ENCODE measurements at regions of chr9 and their contacts with region 1.

Region 1: DNA sequence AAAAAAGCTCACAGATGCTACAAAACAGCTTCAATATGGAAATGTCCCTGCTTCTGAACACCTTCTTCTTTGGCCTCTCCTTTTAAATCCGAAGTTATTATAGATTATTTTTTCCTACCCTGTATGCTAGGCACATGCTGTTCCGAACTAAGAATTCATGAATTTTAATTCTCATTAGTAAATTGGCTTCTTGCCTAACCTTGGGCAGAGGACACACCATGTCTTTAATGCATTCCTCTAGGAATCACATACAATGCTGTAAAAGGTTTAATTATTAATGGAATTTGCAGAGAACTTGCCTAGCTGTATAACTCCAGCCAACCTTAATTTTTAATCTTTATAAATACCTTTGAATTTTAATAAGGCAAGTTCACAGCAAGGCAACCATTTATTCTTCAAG is 234.4 kb downstream of the NTRK2 start:
- DNase-seq: no peak
- H3K4me3 ChIP-seq: no peak overlapping the region
- H3K27ac ChIP-seq: no peak overlapping the region
- H3K4me1 ChIP-seq: no peaks in the 10 kb centered on the region
- H3K27me3 ChIP-seq: no peaks in the 10 kb centered on the region
- CTCF ChIP-seq: no peak
- EP300 ChIP-seq: no peak
- POLR2A ChIP-seq: no peak
- RAD21 ChIP-seq: no peak

Region 2: GRCh38 chr9:84862810-84863287 is 41.1 kb before region 1 on chr9:
- CTCF ChIA-PET with region 1: no interaction called
- POLR2A ChIA-PET with region 1: no interaction called
- DNase-seq: peak; percentile 66
- H3K4me3 ChIP-seq: no peak overlapping the region; a peak in 1 of 8 replicates
- H3K27ac ChIP-seq: no peak overlapping the region
- H3K4me1 ChIP-seq: peaks cover 3 to 28% (median 18%) of the 10 kb centered on the region in 4 experiments; a peak in 4 of 7 replicates
- H3K27me3 ChIP-seq: no peaks in the 10 kb centered on the region
- CTCF ChIP-seq: no peak
- EP300 ChIP-seq: peak in 1 of 2 experiments; percentile 46; a peak in 1 of 3 replicates
- POLR2A ChIP-seq: no peak
- RAD21 ChIP-seq: no peak

Region 3: DNA sequence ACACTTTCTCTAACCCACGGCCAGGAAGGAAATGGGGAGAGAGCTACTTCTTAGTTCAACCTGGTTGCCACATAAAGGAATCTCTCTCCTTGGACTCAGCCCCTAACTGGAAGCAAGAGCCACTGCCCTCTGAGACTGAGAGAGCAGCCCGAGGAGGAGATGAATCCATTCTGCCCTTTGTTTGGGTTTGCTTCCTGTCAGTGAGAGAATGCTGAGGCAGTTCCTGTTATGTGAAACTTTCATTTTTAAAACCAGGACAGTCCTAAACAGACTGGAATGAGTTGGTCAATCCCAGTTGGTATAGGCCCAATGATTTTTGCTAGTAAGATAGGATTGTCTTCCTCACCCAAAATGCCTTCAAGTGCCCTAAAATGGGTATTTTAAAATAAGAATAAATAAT is 29.4 kb before region 1 on chr9:
- CTCF ChIA-PET with region 1: no interaction called
- POLR2A ChIA-PET with region 1: no interaction called
- DNase-seq: no peak
- H3K4me3 ChIP-seq: no peak overlapping the region
- H3K27ac ChIP-seq: no peak overlapping the region
- H3K4me1 ChIP-seq: peaks cover 0 to 5% (median 4%) of the 10 kb centered on the region in 4 experiments; a peak in 4 of 7 replicates
- H3K27me3 ChIP-seq: no peaks in the 10 kb centered on the region
- CTCF ChIP-seq: no peak
- EP300 ChIP-seq: no peak
- POLR2A ChIP-seq: no peak
- RAD21 ChIP-seq: no peak

Region 4: DNA sequence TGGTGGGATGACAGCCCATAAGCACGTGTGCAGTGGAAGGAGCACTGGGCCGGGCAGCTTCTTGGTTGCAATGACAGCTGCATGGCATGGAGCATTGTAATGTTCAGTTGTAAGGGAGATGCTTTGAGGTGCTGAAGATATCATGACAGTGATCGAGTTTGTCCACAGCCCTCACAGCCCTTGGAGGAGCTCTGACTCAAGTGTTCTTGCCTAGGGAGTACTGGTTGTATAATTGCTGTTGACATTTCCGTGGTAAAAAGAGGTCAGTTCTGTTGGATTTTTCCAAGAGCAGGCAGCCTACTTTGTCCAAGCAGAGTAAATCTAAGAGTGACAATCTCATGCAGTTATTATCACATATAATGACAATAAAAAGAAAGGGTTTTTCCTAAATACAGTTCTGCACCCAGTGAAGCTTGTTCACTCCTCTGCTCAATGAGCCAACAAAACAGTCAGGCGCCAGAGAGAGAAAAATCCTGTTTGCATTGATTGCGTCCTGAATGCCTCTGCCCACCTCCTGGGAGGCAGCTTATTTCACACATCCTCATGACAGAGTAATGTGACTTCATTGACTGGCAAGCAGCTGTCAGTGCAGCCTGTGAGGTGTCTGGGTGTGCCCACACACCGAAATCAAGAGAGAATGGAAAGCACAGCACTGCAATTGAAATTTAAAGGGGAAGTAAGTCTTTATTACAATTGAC is 13.6 kb after region 1 on chr9:
- CTCF ChIA-PET with region 1: interaction called, 11 read pairs
- POLR2A ChIA-PET with region 1: no interaction called
- DNase-seq: no peak
- H3K4me3 ChIP-seq: no peak overlapping the region
- H3K27ac ChIP-seq: no peak overlapping the region
- H3K4me1 ChIP-seq: no peaks in the 10 kb centered on the region; a peak in 1 of 7 replicates
- H3K27me3 ChIP-seq: no peaks in the 10 kb centered on the region
- CTCF ChIP-seq: no peak
- EP300 ChIP-seq: no peak
- POLR2A ChIP-seq: no peak
- RAD21 ChIP-seq: no peak

Measured in H1 (cell line).